Endothelial cell of umbilical vein (primary cell): ENCODE measurements at regions of chr12 and their contacts with region 1.

Region 1: GRCh38 chr12:12983420-12984035 is 16.5 kb downstream of the HEBP1 start:
- DNase-seq: peak; percentile 78
- H3K4me3 ChIP-seq: no peak overlapping the region
- H3K27ac ChIP-seq: peak overlapping the region; percentile 25
- H3K4me1 ChIP-seq: peaks cover 20% of the 10 kb centered on the region
- H3K27me3 ChIP-seq: no peaks in the 10 kb centered on the region
- CTCF ChIP-seq: peak; percentile 56 to 60
- POLR2A ChIP-seq: no peak

Region 2: DNA sequence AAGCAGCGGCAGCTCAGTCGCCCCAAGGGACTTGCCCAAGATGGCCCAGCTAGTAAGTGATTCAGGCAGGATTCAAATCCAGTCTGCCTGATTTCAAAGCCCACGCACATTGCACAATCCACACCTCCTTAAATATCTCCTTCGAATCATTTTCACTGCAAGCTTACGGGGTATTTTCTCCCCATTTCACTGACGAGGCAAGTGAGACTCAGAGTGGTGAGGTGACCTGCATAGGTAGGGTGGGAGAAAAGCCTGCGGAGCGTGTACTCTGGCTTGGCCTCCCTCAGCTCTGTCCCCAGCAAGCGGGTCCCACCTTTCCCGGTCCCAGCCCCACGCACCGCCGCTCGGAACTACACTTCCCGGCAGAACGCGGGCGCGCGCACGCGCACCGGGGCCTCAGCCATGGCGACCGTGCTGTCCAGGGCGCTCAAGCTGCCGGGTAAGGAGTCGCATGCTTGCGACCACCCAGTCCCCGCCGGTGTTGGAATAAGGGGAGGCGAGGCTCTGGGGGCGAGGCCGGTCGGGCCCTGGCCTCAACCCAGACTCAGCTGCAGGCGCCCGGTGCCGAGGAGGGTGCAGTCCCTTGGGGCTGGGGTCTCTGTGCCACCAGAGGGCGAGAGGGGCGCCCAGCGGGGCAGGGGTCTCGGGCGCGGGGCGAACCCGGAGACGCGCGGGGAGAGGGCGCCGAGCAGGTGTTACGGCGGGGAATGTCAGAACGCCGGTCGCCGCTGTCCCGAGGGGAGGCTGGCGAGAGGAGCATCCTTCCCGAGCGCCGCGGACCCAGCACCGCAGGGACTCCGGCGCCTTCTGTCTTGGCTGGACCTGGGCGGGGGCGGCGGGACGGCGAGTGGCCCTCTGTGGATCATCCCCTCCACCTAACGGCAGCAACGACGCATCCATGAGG is 60.7 kb after region 1 on chr12 and contains the start of gene FAM234B:
- CTCF ChIA-PET with region 1: interaction called, 11 read pairs
- POLR2A ChIA-PET with region 1: no interaction called
- dilution Hi-C with region 1: no loop called
- intact Hi-C with region 1: no loop called
- DNase-seq: peak; percentile 70
- H3K4me3 ChIP-seq: peak within 1 kb of the TSS; percentile 66 to 85 (median 79)
- H3K27ac ChIP-seq: no peak within 1 kb of the TSS
- H3K4me1 ChIP-seq: peaks cover 10% of the 10 kb centered on the region
- H3K27me3 ChIP-seq: peaks cover 2% of the 10 kb centered on the region in 2 experiments
- CTCF ChIP-seq: peak; percentile 9 to 21
- POLR2A ChIP-seq: no peak
- total RNA-seq, gene FAM234B: 9.4 and 13.2 TPM in 2 replicates

Region 3: DNA sequence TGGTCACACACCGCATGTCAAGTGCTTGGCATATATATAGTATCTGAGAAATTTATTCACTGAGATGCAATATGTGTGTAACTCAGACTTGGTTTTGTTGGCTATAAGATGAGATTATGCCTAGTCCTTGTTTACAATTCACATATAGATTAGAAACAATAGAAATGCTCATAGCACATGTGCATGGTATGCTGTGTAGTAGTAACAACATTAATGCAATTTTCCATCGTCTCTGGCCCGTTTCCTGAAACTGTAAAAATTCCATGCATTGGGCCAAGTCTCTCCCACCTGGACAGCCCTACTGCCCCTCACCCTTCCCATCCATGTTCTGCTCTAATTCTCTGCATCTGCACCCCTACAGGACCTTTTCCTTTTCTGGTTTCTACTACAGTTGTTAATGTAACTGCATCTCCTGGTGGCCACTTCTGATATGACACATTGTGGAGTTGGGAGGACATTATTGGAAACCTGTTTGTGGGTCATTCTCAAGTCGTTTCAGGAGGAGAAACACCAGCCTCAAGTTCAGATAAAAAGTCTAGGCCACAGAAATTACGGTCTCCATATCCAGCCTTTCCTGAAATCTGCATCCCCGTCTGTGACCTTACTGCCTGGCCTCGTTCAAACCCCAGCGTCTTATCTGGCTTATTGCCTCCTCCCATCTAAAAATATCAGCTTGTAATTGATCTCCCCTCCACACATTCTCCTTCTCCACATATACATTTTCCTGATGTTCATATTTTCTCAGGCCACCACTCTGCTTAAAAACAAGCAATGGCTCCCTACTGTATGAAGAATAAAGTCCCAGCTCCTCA is 250.5 kb after region 1 on chr12:
- CTCF ChIA-PET with region 1: interaction called, 8 read pairs
- POLR2A ChIA-PET with region 1: no interaction called
- dilution Hi-C with region 1: no loop called
- intact Hi-C with region 1: loop called (anchors 1 kb)
- DNase-seq: peak; percentile 77
- H3K4me3 ChIP-seq: no peak overlapping the region
- H3K27ac ChIP-seq: no peak overlapping the region
- H3K4me1 ChIP-seq: peaks cover 3% of the 10 kb centered on the region
- H3K27me3 ChIP-seq: no peaks in the 10 kb centered on the region
- CTCF ChIP-seq: peak; percentile 70 to 83
- POLR2A ChIP-seq: no peak